ENCODE measurements at regions of chr16 and their contacts with region 1.

Region 1: DNA sequence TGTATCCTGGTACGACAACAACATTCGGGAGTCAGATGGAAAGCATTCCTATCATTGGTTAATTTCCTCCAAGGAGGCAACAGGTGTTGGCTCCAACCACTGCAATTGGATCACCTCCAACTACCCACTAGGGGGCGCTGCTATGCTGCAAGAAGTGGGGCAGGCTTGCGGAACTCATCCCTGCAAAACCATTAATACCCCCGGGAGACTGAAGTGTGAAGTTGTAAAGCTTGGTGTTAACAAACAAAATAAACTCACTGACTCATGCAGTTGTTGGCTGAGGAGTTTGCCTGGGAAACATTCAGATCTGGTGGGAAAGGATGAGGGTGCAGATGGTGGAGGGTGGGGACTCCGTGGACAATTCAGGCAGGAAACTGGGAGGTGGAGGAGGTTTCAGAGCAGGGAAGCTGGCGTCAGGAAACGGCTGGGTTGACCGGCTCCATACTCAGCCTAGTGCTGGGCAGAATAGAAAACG is 84.9 kb downstream of the HS3ST2 start:
- DNase-seq: peak; percentile 19
- ATAC-seq: peak; percentile 76
- H3K4me3 ChIP-seq: no peak overlapping the region
- H3K27ac ChIP-seq: no peak overlapping the region
- H3K4me1 ChIP-seq: no peaks in the 10 kb centered on the region
- H3K27me3 ChIP-seq: peaks cover 65% of the 10 kb centered on the region
- CTCF ChIP-seq: peak; percentile 51 to 80 (median 74); a peak in 5 of 6 replicates
- POLR2A ChIP-seq: no peak
- RAD21 ChIP-seq: peak; percentile 66

Region 2: DNA sequence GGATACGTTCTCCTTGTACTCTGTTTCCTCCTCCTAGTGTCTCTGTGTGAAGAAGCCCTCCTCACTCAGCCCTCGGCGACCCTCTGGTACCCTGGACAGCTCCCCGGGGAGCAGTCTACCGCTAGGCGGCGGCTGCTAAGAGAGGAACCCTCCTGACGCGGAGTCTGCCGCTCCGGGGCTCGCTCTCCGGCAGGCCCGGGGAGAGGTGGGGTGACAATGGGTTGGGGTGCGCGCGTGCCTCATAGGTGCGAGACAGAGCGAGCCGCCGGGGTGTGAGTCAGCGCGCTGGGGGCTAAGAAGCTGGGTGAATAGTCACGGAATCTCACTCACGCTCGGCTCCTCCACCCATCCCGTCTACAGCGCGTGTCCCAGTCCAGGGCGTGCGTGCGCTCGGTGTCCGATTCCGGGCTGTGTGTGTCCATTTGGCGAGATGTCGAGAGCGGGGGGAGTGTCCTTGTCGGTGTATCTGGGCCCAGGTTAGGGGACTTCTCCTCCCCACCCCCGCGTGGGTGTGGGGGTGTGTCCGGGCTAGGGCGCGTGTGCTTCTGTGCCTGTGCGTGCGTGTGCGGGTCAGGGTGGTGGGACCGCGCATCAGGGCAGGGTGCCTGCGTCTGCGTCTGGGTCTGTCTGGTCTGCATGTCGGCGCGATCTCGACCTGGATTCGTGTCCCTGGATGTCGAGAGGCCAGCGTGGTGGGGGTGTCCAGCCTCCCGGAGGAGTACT is 85.5 kb before region 1 on chr16:
- CTCF ChIA-PET with region 1: no interaction called
- POLR2A ChIA-PET with region 1: no interaction called
- RAD21 ChIA-PET with region 1: no interaction called
- intact Hi-C with region 1: no loop called
- DNase-seq: no peak
- ATAC-seq: no peak
- H3K4me3 ChIP-seq: no peak overlapping the region
- H3K27ac ChIP-seq: no peak overlapping the region
- H3K4me1 ChIP-seq: no peaks in the 10 kb centered on the region
- H3K27me3 ChIP-seq: peaks cover 32% of the 10 kb centered on the region
- CTCF ChIP-seq: no peak
- POLR2A ChIP-seq: no peak
- RAD21 ChIP-seq: no peak

Region 3: GRCh38 chr16:22977294-22977697 is 78.4 kb after region 1 on chr16:
- CTCF ChIA-PET with region 1: no interaction called
- POLR2A ChIA-PET with region 1: no interaction called
- RAD21 ChIA-PET with region 1: no interaction called
- intact Hi-C with region 1: loop called (anchors 2 kb)
- DNase-seq: peak; percentile 23
- ATAC-seq: peak; percentile 80
- H3K4me3 ChIP-seq: no peak overlapping the region
- H3K27ac ChIP-seq: no peak overlapping the region
- H3K4me1 ChIP-seq: no peaks in the 10 kb centered on the region
- H3K27me3 ChIP-seq: peaks cover 15% of the 10 kb centered on the region
- CTCF ChIP-seq: peak; percentile 33 to 45 (median 37); a peak in 5 of 6 replicates
- POLR2A ChIP-seq: no peak
- RAD21 ChIP-seq: peak; percentile 49; the same call in 1 of the 2 replicates

Region 4: DNA sequence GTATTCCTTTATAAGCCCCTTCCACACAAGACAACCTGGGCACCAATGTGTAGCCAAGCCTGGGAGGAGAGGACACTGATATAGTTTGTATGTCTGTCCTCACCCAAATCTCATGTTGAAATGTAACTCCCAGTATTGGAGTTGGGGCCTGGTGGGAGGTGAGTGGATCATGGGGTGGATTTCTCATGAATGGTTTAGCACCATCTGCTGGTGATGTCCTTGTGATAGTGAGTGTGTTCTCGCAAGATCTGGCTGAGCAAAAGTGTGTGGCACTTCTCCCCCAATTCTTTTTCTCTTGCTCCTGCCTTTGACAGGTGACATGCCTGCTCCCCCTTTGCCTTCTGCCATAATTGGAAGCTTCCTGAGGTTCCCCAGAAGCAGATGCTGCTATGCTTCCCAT is 114.6 kb after region 1 on chr16:
- CTCF ChIA-PET with region 1: no interaction called
- POLR2A ChIA-PET with region 1: no interaction called
- RAD21 ChIA-PET with region 1: no interaction called
- intact Hi-C with region 1: loop called (anchors 5 kb)
- DNase-seq: peak; percentile 19
- ATAC-seq: peak; percentile 74
- H3K4me3 ChIP-seq: no peak overlapping the region
- H3K27ac ChIP-seq: no peak overlapping the region
- H3K4me1 ChIP-seq: peaks cover 0 to 4% of the 10 kb centered on the region in 2 experiments; a peak in 1 of 4 replicates
- H3K27me3 ChIP-seq: peaks cover 11% of the 10 kb centered on the region; the same call in 1 of the 2 replicates
- CTCF ChIP-seq: peak in 2 of 3 experiments; percentile 36 to 44; a peak in 3 of 6 replicates
- POLR2A ChIP-seq: no peak
- RAD21 ChIP-seq: peak; percentile 37; the same call in 1 of the 2 replicates

Region 5: GRCh38 chr16:23060458-23061320 is 161.8 kb after region 1 on chr16:
- CTCF ChIA-PET with region 1: interaction called, 3 read pairs
- POLR2A ChIA-PET with region 1: no interaction called
- RAD21 ChIA-PET with region 1: no interaction called
- intact Hi-C with region 1: loop called (anchors 2 kb)
- DNase-seq: peak; percentile 47
- ATAC-seq: peak; percentile 97
- H3K4me3 ChIP-seq: no peak overlapping the region
- H3K27ac ChIP-seq: no peak overlapping the region
- H3K4me1 ChIP-seq: no peaks in the 10 kb centered on the region
- H3K27me3 ChIP-seq: peaks cover 5% of the 10 kb centered on the region; the same call in 1 of the 2 replicates
- CTCF ChIP-seq: peak; percentile 64 to 87 (median 84)
- POLR2A ChIP-seq: no peak
- RAD21 ChIP-seq: peak; percentile 71